Naive thymus-derived CD4-positive, alpha-beta T cell (primary cell): ENCODE measurements at regions of chr13 and their contacts with region 1.

Region 1: DNA sequence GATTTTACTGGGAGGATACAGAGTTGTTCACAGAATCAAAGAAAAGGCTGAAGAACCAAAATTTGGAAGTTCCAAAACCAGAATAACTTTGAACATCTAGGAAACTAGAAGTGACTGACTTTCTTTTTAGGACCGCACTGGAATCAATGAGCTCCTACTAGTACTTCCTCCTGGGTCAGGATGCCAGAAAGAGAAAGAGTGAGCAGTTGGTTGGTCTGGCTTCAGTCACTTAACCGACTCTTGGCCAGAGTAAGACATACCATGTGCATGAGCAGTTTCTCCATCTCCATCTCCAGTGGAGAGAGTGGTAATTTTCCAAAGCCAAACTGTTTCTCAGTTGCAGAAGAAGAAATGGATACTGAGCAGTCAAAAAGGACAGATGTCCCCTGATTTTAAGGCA is 27.1 kb upstream of the MTUS2 start:
- DNase-seq: no peak
- ATAC-seq: no peak
- H3K4me3 ChIP-seq: no peak overlapping the region
- H3K4me3 Mint-ChIP-seq: no peak overlapping the region
- H3K27ac ChIP-seq: no peak overlapping the region
- H3K27ac Mint-ChIP-seq: no peak overlapping the region
- H3K4me1 ChIP-seq: no peaks in the 10 kb centered on the region
- H3K4me1 Mint-ChIP-seq: peaks cover 0 to 6% (median 4%) of the 10 kb centered on the region in 7 donors
- H3K27me3 ChIP-seq: no peaks in the 10 kb centered on the region
- H3K27me3 Mint-ChIP-seq: peaks cover 16 to 42% (median 30%) of the 10 kb centered on the region in 5 donors

Region 2: GRCh38 chr13:27130979-27131623 is 1661.9 kb before region 1 on chr13:
- CTCF ChIA-PET with region 1: no interaction called
- POLR2A ChIA-PET with region 1: no interaction called
- intact Hi-C with region 1: no loop called
- DNase-seq: peak in 3 of 9 donors; percentile 13 to 71 (median 46)
- ATAC-seq: peak; percentile 90
- H3K4me3 ChIP-seq: no peak overlapping the region
- H3K4me3 Mint-ChIP-seq: peak overlapping the region in 5 of 10 donors; percentile 29 to 71 (median 47)
- H3K27ac ChIP-seq: no peak overlapping the region
- H3K27ac Mint-ChIP-seq: peak overlapping the region in 5 of 9 donors; percentile 60 to 87 (median 76)
- H3K4me1 ChIP-seq: peaks cover 0 to 14% of the 10 kb centered on the region in 2 donors
- H3K4me1 Mint-ChIP-seq: peaks cover 46 to 89% (median 82%) of the 10 kb centered on the region in 7 donors
- H3K27me3 ChIP-seq: no peaks in the 10 kb centered on the region
- H3K27me3 Mint-ChIP-seq: no peaks in the 10 kb centered on the region

Region 3: GRCh38 chr13:28679628-28680027 is 113.4 kb before region 1 on chr13:
- CTCF ChIA-PET with region 1: no interaction called
- POLR2A ChIA-PET with region 1: no interaction called
- intact Hi-C with region 1: loop called in 1 of 2 experiments (anchors 1 kb)
- DNase-seq: no peak
- ATAC-seq: peak; percentile 45
- H3K4me3 ChIP-seq: no peak overlapping the region
- H3K4me3 Mint-ChIP-seq: no peak overlapping the region
- H3K27ac ChIP-seq: no peak overlapping the region
- H3K27ac Mint-ChIP-seq: peak overlapping the region in 4 of 9 donors; percentile 30 to 57 (median 49)
- H3K4me1 ChIP-seq: no peaks in the 10 kb centered on the region
- H3K4me1 Mint-ChIP-seq: peaks cover 0 to 2% (median 0%) of the 10 kb centered on the region in 7 donors
- H3K27me3 ChIP-seq: no peaks in the 10 kb centered on the region
- H3K27me3 Mint-ChIP-seq: no peaks in the 10 kb centered on the region

Region 4: DNA sequence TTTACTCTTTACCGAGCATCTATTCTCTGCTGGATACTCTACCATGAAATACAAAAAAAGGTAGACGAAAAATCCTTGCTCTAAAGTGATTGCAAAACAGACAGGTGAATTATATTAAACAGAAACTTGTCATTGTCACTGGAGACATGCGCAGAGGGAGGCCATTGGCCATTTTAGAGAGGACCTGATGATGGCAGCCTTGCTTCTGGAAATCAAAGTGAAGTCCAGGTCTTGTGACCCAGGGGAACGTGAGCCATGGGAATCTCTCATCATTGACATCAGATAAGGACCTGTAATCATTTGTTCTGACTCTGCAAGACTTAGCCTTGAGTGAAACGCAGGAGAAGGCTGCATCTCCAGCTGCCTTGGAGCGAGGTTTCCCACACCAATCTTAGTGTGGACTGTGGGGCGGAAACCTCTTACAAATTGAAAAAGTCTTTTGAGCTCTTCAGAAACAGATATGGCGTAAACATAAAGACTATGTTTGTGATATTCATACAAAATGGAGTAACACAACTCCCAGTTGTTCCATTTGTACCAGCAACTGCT is 57.4 kb before region 1 on chr13:
- CTCF ChIA-PET with region 1: no interaction called
- POLR2A ChIA-PET with region 1: no interaction called
- intact Hi-C with region 1: no loop called
- DNase-seq: no peak
- ATAC-seq: no peak
- H3K4me3 ChIP-seq: no peak overlapping the region
- H3K4me3 Mint-ChIP-seq: no peak overlapping the region
- H3K27ac ChIP-seq: no peak overlapping the region
- H3K27ac Mint-ChIP-seq: no peak overlapping the region
- H3K4me1 ChIP-seq: no peaks in the 10 kb centered on the region
- H3K4me1 Mint-ChIP-seq: peaks cover 4 to 13% (median 7%) of the 10 kb centered on the region in 7 donors
- H3K27me3 ChIP-seq: no peaks in the 10 kb centered on the region
- H3K27me3 Mint-ChIP-seq: peaks cover 2 to 6% (median 4%) of the 10 kb centered on the region in 5 donors